Gastrocnemius medialis (tissue), 4 donors: ENCODE measurements at regions of chr7 and their contacts with region 1.

Region 1: GRCh38 chr7:74083117-74083876 is at the start of gene LIMK1:
- DNase-seq: peak; percentile 55 to 63
- ATAC-seq: peak; percentile 75 to 77
- H3K4me3 ChIP-seq: peak within 1 kb of the TSS; percentile 80 to 95 (median 81)
- H3K27ac ChIP-seq: peak within 1 kb of the TSS; percentile 78 to 93 (median 86)
- H3K4me1 ChIP-seq: peaks cover 17 to 21% of the 10 kb centered on the region in 2 donors
- H3K27me3 ChIP-seq: no peaks in the 10 kb centered on the region
- CTCF ChIP-seq: no peak
- POLR2A ChIP-seq: no peak
- total RNA-seq, gene LIMK1: 15.3 to 56.4 (median 23.3) TPM

Region 2: GRCh38 chr7:74173866-74174605 is 90.7 kb after region 1 on chr7 and contains the start of gene EIF4H:
- in situ Hi-C with region 1: loop called in 1 of 4 experiments (anchors 10 kb)
- intact Hi-C with region 1: loop called (anchors 5 kb)
- DNase-seq: peak; percentile 95 to 96
- ATAC-seq: peak; percentile 87 to 90
- H3K4me3 ChIP-seq: peak within 1 kb of the TSS; percentile 91 to 93 (median 92)
- H3K27ac ChIP-seq: peak within 1 kb of the TSS; percentile 94 to 99 (median 95)
- H3K4me1 ChIP-seq: peaks cover 44 to 48% of the 10 kb centered on the region in 2 donors
- H3K27me3 ChIP-seq: no peaks in the 10 kb centered on the region
- CTCF ChIP-seq: peak in 1 of 5 experiments; percentile 42
- POLR2A ChIP-seq: peak; percentile 97
- total RNA-seq, gene EIF4H: 247 to 430 (median 309) TPM

Region 3: GRCh38 chr7:74254129-74254857 is 171.0 kb after region 1 on chr7 and contains the start of gene RFC2:
- in situ Hi-C with region 1: no loop called
- intact Hi-C with region 1: loop called (anchors 10 kb)
- DNase-seq: peak; percentile 91 to 95
- ATAC-seq: peak; percentile 97
- H3K4me3 ChIP-seq: peak within 1 kb of the TSS; percentile 72 to 90 (median 84)
- H3K27ac ChIP-seq: peak within 1 kb of the TSS; percentile 84 to 91 (median 86)
- H3K4me1 ChIP-seq: peaks cover 12 to 18% of the 10 kb centered on the region in 2 donors
- H3K27me3 ChIP-seq: no peaks in the 10 kb centered on the region
- CTCF ChIP-seq: peak; percentile 42 to 71 (median 46)
- POLR2A ChIP-seq: peak; percentile 61 to 64
- total RNA-seq, gene RFC2: 8.2 to 15.2 (median 12.7) TPM